ENCODE measurements at regions of chr18 and their contacts with region 1.

Region 1: GRCh38 chr18:10188971-10189810 is 265.2 kb upstream of the APCDD1 start:
- DNase-seq: no peak
- ATAC-seq: peak; percentile 92

Region 2: GRCh38 chr18:10041180-10041579 is 148.0 kb before region 1 on chr18:
- intact Hi-C with region 1: loop called (anchors 5 kb)
- DNase-seq: peak; percentile 85
- ATAC-seq: peak; percentile 92